Mammary epithelial cell (primary cell): ENCODE measurements at regions of chr20 and their contacts with region 1.

Region 1: DNA sequence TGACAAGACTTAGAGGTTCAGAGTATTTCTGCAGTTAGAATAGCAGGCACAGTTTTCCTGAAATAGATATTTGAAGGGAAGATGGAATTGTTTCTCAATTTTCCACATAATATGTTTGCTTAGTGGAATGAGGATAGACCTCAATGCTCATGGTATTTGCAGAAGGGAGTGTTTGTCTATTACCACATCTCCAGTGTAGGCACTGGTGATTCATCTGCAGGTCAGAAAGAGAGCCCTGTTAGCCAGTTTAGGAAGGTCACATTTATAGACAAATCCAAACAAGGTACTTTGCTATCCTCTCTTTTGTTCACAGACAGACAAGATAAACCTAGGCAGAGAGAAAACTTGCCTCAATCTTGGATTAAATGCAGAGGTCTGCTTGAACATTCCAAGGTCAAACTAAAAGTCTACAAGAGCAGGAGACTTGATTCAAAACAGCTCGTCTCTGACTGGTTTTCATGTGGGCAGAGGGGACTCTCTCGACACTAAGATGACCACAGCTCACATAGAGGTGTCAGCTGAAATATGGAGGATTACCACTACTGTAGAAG is 22.8 kb downstream of the ISM1 start:
- DNase-seq: peak; percentile 66
- H3K4me3 ChIP-seq: no peak overlapping the region
- H3K27ac ChIP-seq: no peak overlapping the region
- H3K4me1 ChIP-seq: peaks cover 37% of the 10 kb centered on the region
- H3K27me3 ChIP-seq: no peaks in the 10 kb centered on the region
- CTCF ChIP-seq: no peak

Region 2: DNA sequence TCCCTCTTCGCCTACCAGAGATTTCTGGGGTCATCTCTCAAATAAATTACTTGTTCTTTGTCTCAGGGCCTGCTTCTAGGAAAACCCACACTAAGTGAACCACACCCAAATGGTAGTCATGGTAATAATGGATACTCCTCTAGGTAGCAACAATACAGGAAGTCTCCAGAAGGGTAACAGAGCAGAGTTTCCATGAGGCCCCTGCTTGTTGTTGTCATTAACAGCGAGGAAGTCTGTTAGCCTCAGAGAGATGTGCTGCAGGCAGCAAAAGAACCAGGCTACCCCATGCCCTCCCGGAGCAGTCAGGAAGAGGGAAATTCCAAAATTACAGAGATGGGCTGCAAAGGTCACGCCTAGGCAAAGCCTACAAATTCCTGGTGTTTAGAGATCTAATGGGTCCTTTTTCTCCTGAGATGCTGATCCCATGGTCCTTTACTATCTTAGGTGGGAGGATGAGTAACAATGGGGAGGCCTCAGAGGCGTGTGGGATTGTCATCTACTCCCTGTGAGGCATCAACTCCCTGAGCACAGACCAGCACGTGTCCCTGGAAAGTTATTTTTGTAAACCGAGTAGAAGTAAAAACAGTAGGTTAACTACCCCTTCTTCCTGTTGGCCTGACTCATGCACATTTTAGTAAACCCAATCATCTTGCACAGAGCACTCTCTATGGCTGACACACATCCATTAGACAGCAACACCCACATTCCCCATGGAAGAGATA is 12.7 kb before region 1 on chr20:
- CTCF ChIA-PET with region 1: no interaction called
- dilution Hi-C with region 1: no loop called
- in situ Hi-C with region 1: no loop called
- intact Hi-C with region 1: loop called (anchors 2 kb)
- DNase-seq: peak; percentile 89
- H3K4me3 ChIP-seq: no peak overlapping the region
- H3K27ac ChIP-seq: peak overlapping the region; percentile 66
- H3K4me1 ChIP-seq: peaks cover 15% of the 10 kb centered on the region
- H3K27me3 ChIP-seq: no peaks in the 10 kb centered on the region
- CTCF ChIP-seq: no peak

Region 3: DNA sequence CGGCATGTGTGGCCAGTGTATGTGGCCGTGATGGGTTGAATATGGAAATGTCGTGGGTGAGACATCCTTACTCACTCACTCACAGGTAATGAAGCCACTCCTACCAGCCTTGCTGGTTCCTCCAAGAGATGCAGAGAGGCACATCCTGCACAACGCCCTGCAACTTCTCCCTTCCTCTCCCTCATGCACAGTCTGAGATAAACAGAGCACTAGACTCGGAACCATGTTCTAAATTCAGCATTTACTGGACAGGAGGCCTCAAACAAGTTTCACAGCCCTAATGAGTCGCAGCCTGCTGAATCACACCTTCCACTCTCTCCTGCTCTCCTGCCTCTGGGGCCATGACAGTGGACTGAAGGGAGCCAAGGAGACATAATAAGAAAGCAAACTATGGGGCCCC is 68.4 kb after region 1 on chr20:
- CTCF ChIA-PET with region 1: no interaction called
- dilution Hi-C with region 1: no loop called
- in situ Hi-C with region 1: no loop called
- intact Hi-C with region 1: no loop called
- DNase-seq: peak; percentile 57
- H3K4me3 ChIP-seq: no peak overlapping the region
- H3K27ac ChIP-seq: no peak overlapping the region
- H3K4me1 ChIP-seq: peaks cover 4% of the 10 kb centered on the region
- H3K27me3 ChIP-seq: no peaks in the 10 kb centered on the region
- CTCF ChIP-seq: no peak